CD14-positive monocyte (primary cell): ENCODE measurements at regions of chr6 and their contacts with region 1.

Region 1: DNA sequence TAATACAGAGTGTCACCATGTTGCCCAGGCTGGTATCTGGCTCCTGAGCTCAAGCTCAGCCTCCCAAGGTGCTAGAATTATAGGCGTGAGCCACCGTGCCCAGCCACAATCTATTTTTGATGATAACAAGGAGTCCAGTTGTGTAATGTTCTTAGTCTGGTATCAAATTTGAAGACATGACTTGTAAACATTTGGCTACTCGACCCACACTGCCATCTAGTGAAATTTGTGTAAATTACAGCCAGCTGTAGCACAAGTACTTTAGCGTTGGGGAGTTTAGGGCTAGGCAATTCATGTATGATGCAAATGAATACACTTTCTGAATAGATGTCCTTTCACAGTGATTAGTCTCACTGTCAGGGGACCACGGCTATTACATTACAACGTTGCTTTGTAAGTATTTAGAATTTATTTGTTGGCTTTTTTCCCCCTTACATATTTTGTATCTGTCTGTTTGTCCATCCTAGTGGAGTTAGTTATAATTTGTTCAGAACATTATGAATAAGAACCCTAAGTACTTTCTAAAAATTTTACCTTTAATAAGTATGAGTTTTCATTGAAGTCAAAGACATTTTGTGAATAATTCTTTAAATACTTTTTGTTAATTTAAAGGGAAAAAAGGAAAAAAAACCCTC is 139.7 kb downstream of the PRDM13 start:
- DNase-seq: peak; percentile 39 to 55 (median 50)
- H3K4me3 ChIP-seq: no peak overlapping the region
- H3K4me3 Mint-ChIP-seq: no peak overlapping the region
- H3K27ac ChIP-seq: no peak overlapping the region
- H3K27ac Mint-ChIP-seq: no peak overlapping the region
- H3K4me1 ChIP-seq: no peaks in the 10 kb centered on the region
- H3K4me1 Mint-ChIP-seq: no peaks in the 10 kb centered on the region
- H3K27me3 ChIP-seq: peaks cover 5 to 11% of the 10 kb centered on the region in 2 donors
- H3K27me3 Mint-ChIP-seq: peaks cover 4 to 24% (median 19%) of the 10 kb centered on the region in 3 donors
- CTCF ChIP-seq: peak; percentile 89

Region 2: DNA sequence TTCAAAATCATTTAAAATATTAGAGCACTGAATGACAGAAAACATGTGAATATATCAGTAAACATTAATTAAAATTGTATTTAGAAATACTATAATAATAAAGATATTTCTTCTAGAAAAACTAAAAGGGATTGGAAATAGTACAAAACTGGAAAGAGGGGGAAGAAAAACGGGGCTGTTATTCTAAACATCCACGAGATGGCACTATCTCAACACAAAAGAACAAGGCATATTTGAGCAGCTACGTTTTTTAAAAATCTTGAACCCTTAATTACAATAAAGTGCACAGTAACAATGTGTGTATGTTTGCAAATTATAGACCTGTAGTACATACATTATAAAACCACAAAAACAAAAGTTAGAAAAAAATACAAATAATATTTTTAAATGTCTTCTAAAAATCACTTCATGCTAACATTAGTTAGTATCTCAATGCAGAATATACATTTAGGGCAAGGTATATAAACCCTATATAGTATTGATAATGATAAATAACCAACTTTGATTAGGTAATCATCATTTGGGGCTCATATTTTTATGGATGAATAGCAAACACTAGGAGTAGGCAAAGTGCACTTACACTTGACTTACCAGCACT is 278.8 kb before region 1 on chr6:
- intact Hi-C with region 1: loop called (anchors 5 kb)
- DNase-seq: peak; percentile 2 to 24 (median 10)
- H3K4me3 ChIP-seq: no peak overlapping the region
- H3K4me3 Mint-ChIP-seq: no peak overlapping the region
- H3K27ac ChIP-seq: no peak overlapping the region
- H3K27ac Mint-ChIP-seq: no peak overlapping the region
- H3K4me1 ChIP-seq: no peaks in the 10 kb centered on the region
- H3K4me1 Mint-ChIP-seq: no peaks in the 10 kb centered on the region
- H3K27me3 ChIP-seq: no peaks in the 10 kb centered on the region
- H3K27me3 Mint-ChIP-seq: no peaks in the 10 kb centered on the region
- CTCF ChIP-seq: peak; percentile 89

Region 3: DNA sequence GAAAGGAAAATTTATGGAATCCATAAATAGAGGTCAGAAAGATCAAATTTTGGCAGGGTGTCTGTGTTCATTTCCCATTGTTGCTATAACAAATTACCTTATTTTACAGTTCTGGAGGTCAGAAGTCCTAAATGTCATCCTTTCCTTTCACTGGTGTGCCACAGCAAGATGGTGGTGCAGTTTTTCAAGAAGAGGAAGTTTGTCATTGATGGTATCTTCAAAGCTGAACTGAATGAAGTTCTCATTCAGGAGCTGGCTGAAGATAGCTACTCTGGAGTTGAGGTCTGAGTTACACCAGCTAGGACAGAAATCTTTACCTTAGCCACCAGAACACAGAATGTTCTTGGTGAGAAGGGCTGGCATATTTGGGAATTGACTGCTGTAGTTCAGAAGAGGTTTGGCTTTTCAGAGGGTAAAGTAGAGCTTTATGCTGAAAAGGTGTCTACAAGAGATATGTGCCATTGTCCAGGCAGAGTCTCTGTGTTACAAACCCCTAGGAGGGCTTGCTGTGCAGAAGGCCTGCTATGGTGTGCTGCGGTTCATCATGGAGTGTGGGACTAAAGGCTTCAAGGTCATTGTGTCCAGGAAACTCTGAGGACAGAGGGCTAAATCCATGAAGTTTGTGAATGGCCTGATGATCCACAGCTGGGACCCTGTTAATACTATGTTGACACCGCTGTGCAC is 170.7 kb before region 1 on chr6:
- intact Hi-C with region 1: no loop called
- DNase-seq: no peak
- H3K4me3 ChIP-seq: no peak overlapping the region
- H3K4me3 Mint-ChIP-seq: no peak overlapping the region
- H3K27ac ChIP-seq: no peak overlapping the region
- H3K27ac Mint-ChIP-seq: no peak overlapping the region
- H3K4me1 ChIP-seq: no peaks in the 10 kb centered on the region
- H3K4me1 Mint-ChIP-seq: peaks cover 7% of the 10 kb centered on the region
- H3K27me3 ChIP-seq: no peaks in the 10 kb centered on the region
- H3K27me3 Mint-ChIP-seq: peaks cover 2 to 18% (median 3%) of the 10 kb centered on the region in 3 donors
- CTCF ChIP-seq: no peak

Region 4: DNA sequence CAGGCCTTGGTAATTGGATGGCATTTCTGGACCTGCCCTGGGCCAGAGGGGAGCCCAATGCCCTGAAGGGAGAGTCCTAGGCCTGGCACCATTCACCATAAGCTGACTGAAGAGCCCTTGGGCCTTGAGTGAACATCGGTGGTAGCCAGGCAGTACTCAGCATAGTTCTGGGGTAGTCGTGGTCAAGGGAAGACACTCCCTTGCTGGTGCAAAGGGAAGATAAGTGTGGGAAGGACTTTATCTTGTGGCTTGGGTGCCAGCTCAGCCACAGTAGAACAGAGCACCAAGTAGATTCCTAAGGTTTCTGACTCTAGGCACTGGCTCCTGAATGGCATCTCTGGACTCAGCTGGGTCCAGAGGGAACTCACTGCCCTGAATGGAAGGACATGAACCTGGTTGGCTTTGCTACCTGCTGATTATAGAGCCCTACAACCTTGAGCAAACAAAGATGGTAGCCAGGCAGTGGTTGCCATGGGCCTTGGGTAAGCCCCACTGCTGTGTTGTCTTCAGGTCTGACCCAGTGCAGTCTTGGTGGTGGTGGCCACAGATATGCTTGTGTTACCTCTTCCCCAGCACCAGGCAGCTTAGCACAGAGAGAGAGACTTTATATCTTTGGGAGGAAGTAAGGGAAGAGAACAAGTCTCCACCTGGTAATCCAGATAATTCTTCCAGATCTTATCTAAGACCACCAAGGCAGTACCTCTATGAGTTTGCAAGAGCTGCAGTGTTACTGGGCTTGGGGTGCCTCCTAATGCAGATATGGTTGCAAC is 56.3 kb before region 1 on chr6:
- intact Hi-C with region 1: no loop called
- DNase-seq: no peak
- H3K4me3 ChIP-seq: no peak overlapping the region
- H3K4me3 Mint-ChIP-seq: no peak overlapping the region
- H3K27ac ChIP-seq: no peak overlapping the region
- H3K27ac Mint-ChIP-seq: no peak overlapping the region
- H3K4me1 ChIP-seq: no peaks in the 10 kb centered on the region
- H3K4me1 Mint-ChIP-seq: no peaks in the 10 kb centered on the region
- H3K27me3 ChIP-seq: no peaks in the 10 kb centered on the region
- H3K27me3 Mint-ChIP-seq: peaks cover 0 to 2% (median 1%) of the 10 kb centered on the region in 3 donors
- CTCF ChIP-seq: no peak

Region 5: DNA sequence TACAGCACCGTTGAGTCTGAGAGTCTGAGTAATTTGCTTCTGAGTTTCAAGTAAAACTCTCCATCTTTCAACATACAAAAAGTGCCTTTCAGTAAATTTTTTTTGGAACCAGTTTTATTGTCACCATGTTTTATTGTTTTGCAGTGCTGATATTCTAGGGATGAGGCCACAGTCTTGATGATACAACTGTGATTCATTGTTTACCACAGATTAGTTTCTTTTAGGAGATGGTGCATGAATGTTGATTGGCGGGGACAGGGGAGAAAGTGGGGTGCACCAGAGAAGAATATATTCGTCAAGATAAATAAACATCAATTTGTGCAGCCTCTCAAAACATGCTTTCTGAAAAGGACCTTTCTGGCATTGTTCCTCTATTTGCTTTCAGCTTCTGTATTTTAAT is 138.7 kb after region 1 on chr6:
- intact Hi-C with region 1: no loop called
- DNase-seq: no peak
- H3K4me3 ChIP-seq: no peak overlapping the region
- H3K4me3 Mint-ChIP-seq: no peak overlapping the region
- H3K27ac ChIP-seq: no peak overlapping the region
- H3K27ac Mint-ChIP-seq: no peak overlapping the region
- H3K4me1 ChIP-seq: no peaks in the 10 kb centered on the region
- H3K4me1 Mint-ChIP-seq: no peaks in the 10 kb centered on the region
- H3K27me3 ChIP-seq: no peaks in the 10 kb centered on the region
- H3K27me3 Mint-ChIP-seq: peaks cover 0 to 5% (median 2%) of the 10 kb centered on the region in 3 donors
- CTCF ChIP-seq: no peak